ENCODE measurements at regions of chr1 and their contacts with region 1.

Region 1: DNA sequence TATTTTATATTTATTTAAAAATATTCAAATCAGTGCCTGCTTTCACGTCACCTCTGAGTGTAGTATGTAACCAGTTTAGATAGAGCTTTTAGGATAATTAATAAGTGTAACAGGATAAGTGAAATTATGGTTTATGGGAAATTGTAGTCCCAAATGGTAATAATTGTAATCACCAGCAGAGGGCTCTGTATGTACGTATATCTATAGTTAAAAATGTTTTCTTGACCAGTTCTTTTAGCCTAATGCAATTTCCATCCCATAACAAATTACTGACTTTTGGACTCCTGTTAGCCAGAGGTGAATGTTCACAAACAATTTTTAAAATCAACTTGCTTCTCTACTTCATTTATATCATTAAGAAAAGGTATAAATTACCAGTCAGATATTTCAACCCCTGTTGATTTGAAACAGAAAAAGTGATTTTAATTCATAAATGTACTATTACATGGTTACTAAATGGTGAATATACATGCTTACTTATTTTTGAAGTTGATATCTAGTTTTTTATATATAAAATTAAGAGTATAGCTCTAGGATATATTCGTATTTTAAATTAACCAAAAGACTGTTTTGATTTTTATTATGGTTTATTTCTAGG is 25.3 kb downstream of the SLC30A7 start:
- DNase-seq: peak; percentile 67
- H3K4me3 ChIP-seq: no peak overlapping the region
- H3K27ac ChIP-seq: no peak overlapping the region
- H3K4me1 ChIP-seq: no peaks in the 10 kb centered on the region
- H3K27me3 ChIP-seq: no peaks in the 10 kb centered on the region
- CTCF ChIP-seq: peak; percentile 72

Region 2: GRCh38 chr1:100902365-100902764 is 18.8 kb before region 1 on chr1:
- CTCF ChIA-PET with region 1: no interaction called
- POLR2A ChIA-PET with region 1: no interaction called
- intact Hi-C with region 1: no loop called
- DNase-seq: no peak
- H3K4me3 ChIP-seq: no peak overlapping the region
- H3K27ac ChIP-seq: no peak overlapping the region
- H3K4me1 ChIP-seq: peaks cover 3% of the 10 kb centered on the region
- H3K27me3 ChIP-seq: no peaks in the 10 kb centered on the region
- CTCF ChIP-seq: no peak

Region 3: DNA sequence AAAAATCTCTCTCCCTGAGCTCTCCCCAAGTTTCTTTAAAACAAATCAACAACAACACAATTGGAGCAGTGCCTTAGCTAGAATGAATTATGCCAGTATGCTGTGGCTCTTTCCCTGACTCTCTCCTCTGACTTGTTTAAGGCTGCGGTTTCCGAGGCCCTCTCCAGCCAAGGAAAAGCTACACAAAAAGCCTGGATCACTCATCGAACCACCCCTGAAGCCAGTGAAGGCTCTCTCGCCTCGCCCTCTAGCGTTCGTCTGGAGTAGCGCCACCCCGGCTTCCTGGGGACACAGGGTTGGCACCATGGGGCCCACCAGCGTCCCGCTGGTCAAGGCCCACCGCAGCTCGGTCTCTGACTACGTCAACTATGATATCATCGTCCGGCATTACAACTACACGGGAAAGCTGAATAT is 317.5 kb after region 1 on chr1:
- CTCF ChIA-PET with region 1: no interaction called
- POLR2A ChIA-PET with region 1: no interaction called
- intact Hi-C with region 1: loop called (anchors 2 kb)
- DNase-seq: peak; percentile 91
- H3K4me3 ChIP-seq: peak overlapping the region; percentile 54
- H3K27ac ChIP-seq: no peak overlapping the region
- H3K4me1 ChIP-seq: peaks cover 12% of the 10 kb centered on the region
- H3K27me3 ChIP-seq: no peaks in the 10 kb centered on the region
- CTCF ChIP-seq: peak; percentile 95

Region 4: DNA sequence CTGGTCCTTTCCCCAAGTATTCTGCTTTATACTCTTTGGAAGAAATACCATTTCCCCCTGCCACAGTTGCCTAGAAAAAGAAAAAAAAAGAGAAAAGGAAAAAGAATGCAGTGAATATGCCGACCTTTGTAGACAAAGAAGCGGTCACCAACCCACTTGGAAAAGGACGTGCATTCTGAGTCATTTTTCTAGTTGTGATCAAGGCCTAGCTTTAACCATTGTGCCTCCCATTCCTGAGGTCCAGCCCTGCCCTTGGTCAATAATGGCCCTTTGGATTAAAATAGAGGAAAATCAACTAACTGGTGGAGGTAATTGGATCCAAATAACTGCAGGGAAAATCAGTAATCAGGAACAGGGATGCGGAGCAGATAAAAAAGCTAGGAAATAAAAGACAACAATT is 340.4 kb after region 1 on chr1:
- CTCF ChIA-PET with region 1: interaction called, 10 read pairs
- POLR2A ChIA-PET with region 1: no interaction called
- intact Hi-C with region 1: no loop called
- DNase-seq: no peak
- H3K4me3 ChIP-seq: no peak overlapping the region
- H3K27ac ChIP-seq: no peak overlapping the region
- H3K4me1 ChIP-seq: no peaks in the 10 kb centered on the region
- H3K27me3 ChIP-seq: no peaks in the 10 kb centered on the region
- CTCF ChIP-seq: no peak

Region 5: GRCh38 chr1:101288491-101288944 is 367.3 kb after region 1 on chr1:
- CTCF ChIA-PET with region 1: interaction called, 4 read pairs
- POLR2A ChIA-PET with region 1: no interaction called
- intact Hi-C with region 1: loop called (anchors 1 kb)
- DNase-seq: peak; percentile 81
- H3K4me3 ChIP-seq: no peak overlapping the region
- H3K27ac ChIP-seq: no peak overlapping the region
- H3K4me1 ChIP-seq: peaks cover 20% of the 10 kb centered on the region
- H3K27me3 ChIP-seq: no peaks in the 10 kb centered on the region
- CTCF ChIP-seq: peak; percentile 94

Region 6: GRCh38 chr1:101357444-101357986 is 436.3 kb after region 1 on chr1:
- CTCF ChIA-PET with region 1: no interaction called
- POLR2A ChIA-PET with region 1: no interaction called
- intact Hi-C with region 1: loop called (anchors 5 kb)
- DNase-seq: peak; percentile 83
- H3K4me3 ChIP-seq: no peak overlapping the region
- H3K27ac ChIP-seq: no peak overlapping the region
- H3K4me1 ChIP-seq: no peaks in the 10 kb centered on the region
- H3K27me3 ChIP-seq: no peaks in the 10 kb centered on the region
- CTCF ChIP-seq: peak; percentile 94

Region 7: GRCh38 chr1:101592845-101593244 is 671.6 kb after region 1 on chr1:
- CTCF ChIA-PET with region 1: no interaction called
- POLR2A ChIA-PET with region 1: no interaction called
- intact Hi-C with region 1: no loop called
- DNase-seq: peak; percentile 40
- H3K4me3 ChIP-seq: no peak overlapping the region
- H3K27ac ChIP-seq: no peak overlapping the region
- H3K4me1 ChIP-seq: no peaks in the 10 kb centered on the region
- H3K27me3 ChIP-seq: no peaks in the 10 kb centered on the region
- CTCF ChIP-seq: no peak